ENCODE measurements at regions of chr19 and their contacts with region 1.

Region 1: GRCh38 chr19:33176670-33177416 is 17.3 kb upstream of the LRP3 start:
- DNase-seq: peak; percentile 88 to 96 (median 92)
- H3K4me3 ChIP-seq: peak overlapping the region; percentile 63 to 97 (median 87)
- H3K27ac ChIP-seq: peak overlapping the region; percentile 78 to 98 (median 93)
- H3K27me3 ChIP-seq: no peaks in the 10 kb centered on the region
- CTCF ChIP-seq: peak in 31 of 56 donors; percentile 9 to 50 (median 27)

Region 2: GRCh38 chr19:33080761-33081681 is 95.8 kb before region 1 on chr19 and contains the start of gene GPATCH1:
- intact Hi-C with region 1: loop called in 1 of 2 experiments (anchors 5 kb)
- DNase-seq: peak; percentile 87 to 95 (median 92)
- H3K4me3 ChIP-seq: peak within 1 kb of the TSS; percentile 62 to 99 (median 94)
- H3K27ac ChIP-seq: peak within 1 kb of the TSS; percentile 6 to 96 (median 87)
- H3K27me3 ChIP-seq: no peaks in the 10 kb centered on the region
- CTCF ChIP-seq: peak in 40 of 56 donors; percentile 11 to 57 (median 34)
- total RNA-seq, gene GPATCH1: 9.0 to 18.2 (median 13.1) TPM

Region 3: GRCh38 chr19:33143897-33144405 is 32.9 kb before region 1 on chr19:
- intact Hi-C with region 1: loop called in 1 of 2 experiments (anchors 5 kb)
- DNase-seq: peak; percentile 34 to 75 (median 54)
- H3K4me3 ChIP-seq: peak overlapping the region in 20 of 59 donors; percentile 4 to 53 (median 20)
- H3K27ac ChIP-seq: no peak overlapping the region
- H3K27me3 ChIP-seq: peaks cover 0 to 2% (median 0%) of the 10 kb centered on the region in 45 donors
- CTCF ChIP-seq: peak; percentile 71 to 96 (median 92)

Region 4: DNA sequence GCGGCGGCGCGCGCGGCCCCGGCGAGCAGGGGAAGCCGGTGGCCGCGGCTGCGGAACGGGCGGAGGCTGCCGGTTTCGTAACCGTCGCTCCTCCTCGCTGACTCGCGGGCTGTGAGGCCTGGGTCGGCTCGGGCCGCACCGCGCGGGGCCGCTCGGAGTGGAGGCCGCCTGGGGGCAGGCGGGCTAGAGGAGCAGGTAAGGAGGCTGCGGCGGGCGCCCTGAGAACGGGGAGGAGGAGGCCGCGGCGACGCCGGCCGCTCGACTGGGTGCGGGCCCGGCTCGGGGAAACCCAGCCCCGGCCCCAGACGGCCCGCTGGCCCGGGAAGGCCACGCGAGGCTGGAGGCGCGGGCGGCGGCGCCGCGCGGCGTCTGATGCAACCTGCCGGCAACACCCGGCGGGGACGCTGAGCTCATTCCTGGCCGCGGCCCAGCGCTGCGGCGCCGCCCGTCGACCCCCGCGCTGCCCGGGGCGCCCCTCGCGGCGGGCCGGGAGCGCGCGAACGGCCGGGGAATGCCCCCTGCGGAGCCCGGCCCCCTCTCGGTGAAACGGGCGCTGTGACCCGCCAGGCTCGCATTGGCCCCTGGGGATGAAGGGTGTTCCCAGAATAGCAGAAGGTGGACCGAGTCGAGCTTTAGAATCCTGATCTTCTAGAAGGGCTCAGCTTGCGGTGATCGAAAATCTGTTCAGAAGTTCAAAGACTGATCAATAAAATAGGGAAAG is 197.0 kb after region 1 on chr19 and contains the start of gene CEBPG:
- intact Hi-C with region 1: loop called in 1 of 2 experiments (anchors 1 kb)
- DNase-seq: peak in 1 of 10 donors; percentile 52
- H3K4me3 ChIP-seq: peak within 1 kb of the TSS; percentile 55 to 94 (median 80)
- H3K27ac ChIP-seq: peak within 1 kb of the TSS in 57 of 59 donors; percentile 7 to 97 (median 87)
- H3K27me3 ChIP-seq: no peaks in the 10 kb centered on the region
- CTCF ChIP-seq: peak in 7 of 56 donors; percentile 1 to 25 (median 7)
- total RNA-seq, gene CEBPG: 15.1 to 42.7 (median 26.1) TPM